WTC11 (cell line): ENCODE measurements at regions of chr17 and their contacts with region 1.

Region 1: GRCh38 chr17:58200017-58200633 is 7.6 kb downstream of the EPX start:
- DNase-seq: peak; percentile 83
- ATAC-seq: peak; percentile 96
- H3K4me3 Mint-ChIP-seq: no peak overlapping the region
- H3K27ac Mint-ChIP-seq: no peak overlapping the region
- H3K4me1 Mint-ChIP-seq: no peaks in the 10 kb centered on the region
- H3K27me3 Mint-ChIP-seq: peaks cover 11% of the 10 kb centered on the region
- CTCF ChIP-seq: peak; percentile 61; the same call in 1 of the 2 replicates

Region 2: DNA sequence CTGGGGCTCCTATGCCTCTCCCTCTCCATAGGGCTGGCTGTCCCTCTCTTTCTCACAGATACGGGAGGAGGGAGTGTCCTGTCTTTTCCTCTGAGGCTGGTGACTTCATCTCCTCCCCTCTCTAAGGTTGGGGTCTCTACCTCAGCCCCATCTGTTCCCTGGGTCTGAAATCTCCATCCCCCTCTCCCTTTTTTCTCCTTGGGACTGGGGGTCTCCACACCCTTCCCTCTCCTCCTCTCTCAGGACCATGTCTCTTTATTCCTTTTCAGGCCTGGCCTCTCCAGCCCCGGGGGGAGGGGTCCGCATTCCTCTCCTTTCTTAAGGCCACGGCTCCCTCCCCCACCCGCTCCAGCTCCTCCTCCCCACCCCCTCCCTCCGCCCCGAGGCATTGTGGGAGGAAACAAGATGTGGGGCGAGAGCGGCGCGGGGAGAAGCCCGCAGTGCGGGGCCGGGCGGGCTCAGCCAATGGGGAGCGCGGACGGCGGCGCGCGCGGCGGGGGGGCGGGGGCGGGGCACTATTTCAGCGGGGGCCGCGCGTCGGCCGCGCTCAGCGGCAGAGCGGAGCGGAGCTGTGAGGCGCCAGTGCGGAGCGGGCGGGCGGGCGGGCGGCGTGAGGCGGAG is 117.1 kb before region 1 on chr17 and contains the start of gene DYNLL2:
- CTCF ChIA-PET with region 1: no interaction called
- POLR2A ChIA-PET with region 1: no interaction called
- DNase-seq: peak; percentile 97
- ATAC-seq: peak; percentile 90
- H3K4me3 Mint-ChIP-seq: peak within 1 kb of the TSS; percentile 86
- H3K27ac Mint-ChIP-seq: peak within 1 kb of the TSS; percentile 90
- H3K4me1 Mint-ChIP-seq: peaks cover 40% of the 10 kb centered on the region
- H3K27me3 Mint-ChIP-seq: peaks cover 6% of the 10 kb centered on the region
- CTCF ChIP-seq: no peak
- total RNA-seq, gene DYNLL2: 32.1 to 34.6 TPM (median 32.2 TPM) in 3 replicates

Region 3: DNA sequence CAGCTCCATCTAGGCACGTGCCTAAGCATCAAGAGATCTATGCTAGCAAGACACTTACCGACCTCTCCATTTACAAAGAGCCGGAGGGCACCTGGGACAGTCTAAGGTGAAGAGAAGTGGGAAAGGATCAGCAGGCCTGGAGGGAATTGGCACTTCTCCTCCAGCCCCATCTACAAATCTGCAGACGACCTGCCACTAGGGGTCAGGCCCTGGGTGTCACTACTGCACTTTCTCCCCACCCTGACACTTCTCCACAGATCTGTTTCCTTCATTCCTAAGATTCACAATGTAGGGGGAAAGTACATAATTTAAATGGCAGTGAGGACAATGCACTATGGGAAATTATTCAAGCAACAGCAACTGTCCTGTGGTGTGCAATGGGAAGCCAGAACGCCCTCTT is 10.8 kb after region 1 on chr17:
- CTCF ChIA-PET with region 1: interaction called, 15 read pairs
- POLR2A ChIA-PET with region 1: no interaction called
- DNase-seq: no peak
- ATAC-seq: peak; percentile 73
- H3K4me3 Mint-ChIP-seq: no peak overlapping the region
- H3K27ac Mint-ChIP-seq: no peak overlapping the region
- H3K4me1 Mint-ChIP-seq: no peaks in the 10 kb centered on the region
- H3K27me3 Mint-ChIP-seq: no peaks in the 10 kb centered on the region
- CTCF ChIP-seq: no peak

Region 4: DNA sequence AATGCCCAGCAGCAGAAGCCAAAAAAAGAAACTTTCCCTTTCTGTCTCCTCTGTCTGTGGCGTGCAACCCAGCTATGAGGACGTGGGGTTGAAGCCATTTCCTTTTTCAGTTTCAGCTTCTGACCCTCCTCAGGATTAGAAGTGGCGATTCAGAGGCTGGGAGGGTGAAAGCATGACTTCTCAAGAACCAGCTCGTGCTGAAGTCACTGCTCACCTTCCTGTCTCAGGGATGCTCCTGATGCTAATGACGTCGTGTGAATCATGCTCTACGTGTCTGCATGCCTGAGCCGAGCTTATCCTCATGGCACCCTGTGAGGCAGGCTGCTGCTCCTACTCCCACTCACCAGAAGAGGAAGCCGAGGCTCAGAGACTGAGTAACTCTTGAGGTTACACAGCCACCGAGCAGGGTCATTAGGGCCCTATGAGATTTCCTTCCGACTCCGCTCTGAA is 32.6 kb after region 1 on chr17:
- CTCF ChIA-PET with region 1: interaction called, 20 read pairs
- POLR2A ChIA-PET with region 1: no interaction called
- DNase-seq: peak; percentile 16
- ATAC-seq: peak; percentile 64
- H3K4me3 Mint-ChIP-seq: no peak overlapping the region
- H3K27ac Mint-ChIP-seq: no peak overlapping the region
- H3K4me1 Mint-ChIP-seq: peaks cover 11% of the 10 kb centered on the region
- H3K27me3 Mint-ChIP-seq: peaks cover 72% of the 10 kb centered on the region
- CTCF ChIP-seq: no peak

Region 5: GRCh38 chr17:58254803-58255388 is 54.8 kb after region 1 on chr17:
- CTCF ChIA-PET with region 1: interaction called, 31 read pairs
- POLR2A ChIA-PET with region 1: no interaction called
- DNase-seq: peak; percentile 65
- ATAC-seq: peak; percentile 99
- H3K4me3 Mint-ChIP-seq: peak overlapping the region; percentile 32; the same call in 1 of the 2 replicates
- H3K27ac Mint-ChIP-seq: no peak overlapping the region
- H3K4me1 Mint-ChIP-seq: peaks cover 5% of the 10 kb centered on the region
- H3K27me3 Mint-ChIP-seq: peaks cover 76% of the 10 kb centered on the region
- CTCF ChIP-seq: no peak